ENCODE measurements at regions of chr7 and their contacts with region 1.

Region 1: GRCh38 chr7:27160546-27161213 is 4.2 kb upstream of the HOXA7 start:
- DNase-seq: peak; percentile 87 to 93
- ATAC-seq: peak; percentile 79 to 89 (median 81)
- H3K4me3 ChIP-seq: peak overlapping the region; percentile 67
- H3K4me3 Mint-ChIP-seq: peak overlapping the region; percentile 80
- H3K27ac ChIP-seq: no peak overlapping the region
- H3K27ac Mint-ChIP-seq: peak overlapping the region in 1 of 2 donors; percentile 65
- H3K4me1 ChIP-seq: peaks cover 64% of the 10 kb centered on the region
- H3K4me1 Mint-ChIP-seq: peaks cover 20 to 54% of the 10 kb centered on the region in 2 donors
- H3K27me3 ChIP-seq: peaks cover 66% of the 10 kb centered on the region
- H3K27me3 Mint-ChIP-seq: peaks cover 66 to 74% of the 10 kb centered on the region in 2 donors
- CTCF ChIP-seq: peak; percentile 100

Region 2: DNA sequence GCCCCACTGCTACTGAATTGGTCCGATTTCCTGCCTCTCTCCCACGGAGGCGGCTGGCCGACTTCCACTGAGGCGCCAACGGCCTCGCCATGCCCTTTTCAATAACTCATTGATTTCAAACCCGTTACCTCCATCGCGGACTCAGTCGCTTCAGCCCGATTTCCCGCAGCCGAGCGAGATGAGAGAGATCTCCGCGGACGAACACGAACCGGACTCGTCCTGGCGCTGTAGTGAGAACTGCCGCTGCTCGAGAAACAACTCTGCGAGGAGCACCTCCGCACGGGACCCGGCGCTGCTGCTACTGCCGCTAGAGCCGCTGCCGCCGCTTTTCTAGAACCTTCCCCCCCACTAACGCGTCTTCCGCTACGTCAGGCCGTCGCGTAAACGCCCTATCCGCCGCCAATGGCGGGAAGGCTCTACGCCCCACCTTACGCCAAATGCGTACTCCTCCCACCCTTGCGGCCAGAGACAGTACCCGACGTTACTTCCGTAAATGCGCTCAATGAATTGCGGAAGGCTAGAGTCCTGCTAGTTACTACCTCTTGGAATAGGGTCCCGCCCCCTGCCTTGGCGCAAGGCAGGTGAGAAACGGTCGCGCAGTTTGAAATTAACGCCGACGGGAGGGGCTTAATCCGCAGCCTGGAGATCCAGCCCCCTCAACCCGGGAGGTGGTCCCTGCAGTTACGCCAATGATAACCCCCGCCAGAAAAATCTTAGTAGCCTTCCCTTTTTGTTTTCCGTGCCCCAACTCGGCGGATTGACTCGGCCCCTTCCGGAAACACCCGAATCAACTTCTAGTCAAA is 960.0 kb before region 1 on chr7 and contains the start of gene HNRNPA2B1:
- intact Hi-C with region 1: loop called (anchors 5 kb)
- DNase-seq: peak; percentile 98 to 99
- ATAC-seq: peak; percentile 69 to 87 (median 69)
- H3K4me3 ChIP-seq: peak within 1 kb of the TSS; percentile 87
- H3K4me3 Mint-ChIP-seq: peak within 1 kb of the TSS; percentile 100
- H3K27ac ChIP-seq: peak within 1 kb of the TSS; percentile 95
- H3K27ac Mint-ChIP-seq: peak within 1 kb of the TSS; percentile 100
- H3K4me1 ChIP-seq: peaks cover 14% of the 10 kb centered on the region
- H3K4me1 Mint-ChIP-seq: peaks cover 84 to 85% of the 10 kb centered on the region in 2 donors
- H3K27me3 ChIP-seq: no peaks in the 10 kb centered on the region
- H3K27me3 Mint-ChIP-seq: peaks cover 2 to 5% of the 10 kb centered on the region in 2 donors
- CTCF ChIP-seq: no peak
- total RNA-seq, gene HNRNPA2B1: 473 to 627 (median 585) TPM

Region 3: DNA sequence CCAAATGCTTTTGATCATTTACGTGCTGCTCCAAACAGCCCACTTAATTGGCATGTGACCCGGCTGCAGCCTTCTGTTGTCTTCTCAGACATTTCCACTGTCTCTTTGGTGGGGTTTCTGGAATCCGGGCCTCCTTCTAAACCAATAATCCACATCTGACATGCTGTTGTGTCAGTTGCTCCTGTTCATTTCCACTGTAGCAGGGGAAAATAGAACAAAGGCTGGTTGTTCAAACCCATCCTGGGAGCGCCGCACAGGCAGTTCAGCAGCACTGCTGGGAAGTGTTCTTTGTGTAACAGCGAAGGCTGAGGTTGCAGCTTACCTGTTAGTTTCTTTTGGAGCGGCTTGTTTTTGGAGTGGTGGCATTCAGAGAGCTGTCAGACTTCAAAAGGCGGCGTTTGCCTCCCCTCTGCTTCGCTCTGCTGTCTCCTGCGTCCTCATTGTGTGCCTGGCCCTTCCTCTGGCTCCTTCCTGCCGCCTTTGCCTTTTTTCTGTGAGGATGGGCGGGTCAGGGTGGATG is 719.6 kb before region 1 on chr7:
- intact Hi-C with region 1: no loop called
- DNase-seq: no peak
- ATAC-seq: no peak
- H3K4me3 ChIP-seq: no peak overlapping the region
- H3K4me3 Mint-ChIP-seq: no peak overlapping the region
- H3K27ac ChIP-seq: no peak overlapping the region
- H3K27ac Mint-ChIP-seq: no peak overlapping the region
- H3K4me1 ChIP-seq: no peaks in the 10 kb centered on the region
- H3K4me1 Mint-ChIP-seq: no peaks in the 10 kb centered on the region
- H3K27me3 ChIP-seq: no peaks in the 10 kb centered on the region
- H3K27me3 Mint-ChIP-seq: peaks cover 9 to 14% of the 10 kb centered on the region in 2 donors
- CTCF ChIP-seq: no peak

Region 4: DNA sequence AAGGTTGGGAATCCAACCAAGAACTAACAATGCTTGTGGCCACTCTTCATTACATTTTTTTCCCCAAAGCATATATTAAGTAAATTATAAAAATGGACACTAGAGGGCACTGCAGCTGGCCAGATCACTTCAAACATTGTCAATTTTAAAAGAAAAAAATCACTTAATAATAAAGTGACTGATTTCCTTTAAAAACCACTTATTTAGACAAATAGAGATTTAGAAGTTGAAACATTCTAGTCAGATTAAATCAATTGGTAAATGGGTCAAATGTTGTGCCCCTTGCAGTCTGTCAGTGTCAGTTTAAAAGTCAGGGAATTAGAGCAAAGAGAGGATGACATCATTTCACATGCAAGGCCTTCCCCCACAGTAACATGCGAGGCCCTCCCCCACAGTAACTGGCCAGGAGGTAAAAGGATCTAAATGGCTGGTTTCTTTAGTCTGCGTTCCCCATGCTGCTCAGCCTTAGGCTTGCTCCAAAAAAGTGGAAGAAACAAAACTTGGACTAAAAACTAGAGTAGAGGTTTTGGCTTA is 474.2 kb before region 1 on chr7:
- intact Hi-C with region 1: loop called (anchors 1 kb)
- DNase-seq: peak in 1 of 2 donors; percentile 68
- ATAC-seq: peak in 2 of 3 donors; percentile 42 to 52
- H3K4me3 ChIP-seq: no peak overlapping the region
- H3K4me3 Mint-ChIP-seq: no peak overlapping the region
- H3K27ac ChIP-seq: no peak overlapping the region
- H3K27ac Mint-ChIP-seq: no peak overlapping the region
- H3K4me1 ChIP-seq: no peaks in the 10 kb centered on the region
- H3K4me1 Mint-ChIP-seq: peaks cover 0 to 6% of the 10 kb centered on the region in 2 donors
- H3K27me3 ChIP-seq: no peaks in the 10 kb centered on the region
- H3K27me3 Mint-ChIP-seq: no peaks in the 10 kb centered on the region
- CTCF ChIP-seq: peak; percentile 80

Region 5: DNA sequence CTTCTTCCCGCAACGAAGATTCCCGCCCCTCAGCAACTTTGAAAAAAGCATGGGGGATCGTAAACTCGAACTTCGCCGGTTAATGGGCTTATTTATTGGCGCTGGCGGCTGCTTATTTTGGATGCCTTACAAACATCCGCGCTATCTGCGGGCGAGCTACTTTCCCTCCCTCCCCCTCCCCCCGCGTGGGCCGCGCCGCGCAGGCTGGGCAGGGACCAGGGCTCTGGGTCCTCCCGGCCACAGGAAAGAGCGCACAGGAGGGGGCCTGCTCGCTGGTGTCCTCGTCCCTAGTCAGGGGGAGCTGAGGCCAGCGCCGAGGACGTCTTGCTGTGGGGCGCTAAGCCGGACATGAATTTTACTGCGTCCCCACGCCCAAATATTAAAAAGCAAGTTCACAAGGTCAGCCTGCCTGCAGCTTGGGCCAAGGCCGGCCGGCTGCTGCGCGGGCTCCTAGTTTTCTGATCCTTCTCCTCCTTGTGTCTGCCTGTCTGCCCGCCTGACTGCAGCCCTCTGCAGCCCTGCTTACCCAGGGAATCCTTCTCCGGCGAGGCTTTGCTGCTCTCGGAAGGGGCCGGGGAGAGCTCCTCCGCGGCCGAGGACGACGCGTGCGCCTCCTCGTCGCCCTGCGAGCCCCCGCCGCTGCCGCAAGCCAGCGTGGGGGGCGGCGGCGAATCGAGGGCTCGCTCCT is 12.3 kb after region 1 on chr7:
- intact Hi-C with region 1: loop called (anchors 2 kb)
- DNase-seq: peak in 1 of 2 donors; percentile 53
- ATAC-seq: peak; percentile 11 to 43 (median 22)
- H3K4me3 ChIP-seq: peak overlapping the region; percentile 49
- H3K4me3 Mint-ChIP-seq: peak overlapping the region; percentile 87
- H3K27ac ChIP-seq: peak overlapping the region; percentile 23
- H3K27ac Mint-ChIP-seq: peak overlapping the region in 1 of 2 donors; percentile 9
- H3K4me1 ChIP-seq: peaks cover 53% of the 10 kb centered on the region
- H3K4me1 Mint-ChIP-seq: peaks cover 26 to 32% of the 10 kb centered on the region in 2 donors
- H3K27me3 ChIP-seq: peaks cover 69% of the 10 kb centered on the region
- H3K27me3 Mint-ChIP-seq: peaks cover 52 to 60% of the 10 kb centered on the region in 2 donors
- CTCF ChIP-seq: no peak

Region 6: GRCh38 chr7:27242555-27243339 is 82.1 kb after region 1 on chr7 and contains the start of gene EVX1:
- intact Hi-C with region 1: loop called (anchors 10 kb)
- DNase-seq: peak in 1 of 2 donors; percentile 60
- ATAC-seq: peak in 1 of 3 donors; percentile 56
- H3K4me3 ChIP-seq: no peak within 1 kb of the TSS
- H3K4me3 Mint-ChIP-seq: no peak within 1 kb of the TSS
- H3K27ac ChIP-seq: no peak within 1 kb of the TSS
- H3K27ac Mint-ChIP-seq: peak within 1 kb of the TSS in 1 of 2 donors; percentile 13
- H3K4me1 ChIP-seq: peaks cover 21% of the 10 kb centered on the region
- H3K4me1 Mint-ChIP-seq: peaks cover 0 to 5% of the 10 kb centered on the region in 2 donors
- H3K27me3 ChIP-seq: peaks cover 76% of the 10 kb centered on the region
- H3K27me3 Mint-ChIP-seq: peaks cover 67 to 73% of the 10 kb centered on the region in 2 donors
- CTCF ChIP-seq: no peak
- total RNA-seq, gene EVX1: not detected